HEK293 (cell line): ENCODE measurements at regions of chr17 and their contacts with region 1.

Region 1: GRCh38 chr17:58136669-58137283 is 11.4 kb upstream of the OR4D1 start:
- H3K4me3 ChIP-seq: no peak overlapping the region
- H3K27ac ChIP-seq: no peak overlapping the region
- H3K4me1 ChIP-seq: no peaks in the 10 kb centered on the region
- CTCF ChIP-seq: 0 out of 2 replicates have a peak, but pooled peaks have one; percentile 41

Region 2: GRCh38 chr17:58121925-58122324 is 14.9 kb before region 1 on chr17:
- CTCF ChIA-PET with region 1: interaction called, 19 read pairs
- POLR2A ChIA-PET with region 1: no interaction called
- H3K4me3 ChIP-seq: no peak overlapping the region
- H3K27ac ChIP-seq: no peak overlapping the region
- H3K4me1 ChIP-seq: no peaks in the 10 kb centered on the region
- CTCF ChIP-seq: peak; percentile 68

Region 3: GRCh38 chr17:58148609-58149008 is 11.8 kb after region 1 on chr17:
- CTCF ChIA-PET with region 1: interaction called, 12 read pairs
- POLR2A ChIA-PET with region 1: no interaction called
- H3K4me3 ChIP-seq: no peak overlapping the region
- H3K27ac ChIP-seq: no peak overlapping the region
- H3K4me1 ChIP-seq: no peaks in the 10 kb centered on the region
- CTCF ChIP-seq: no peak

Region 4: DNA sequence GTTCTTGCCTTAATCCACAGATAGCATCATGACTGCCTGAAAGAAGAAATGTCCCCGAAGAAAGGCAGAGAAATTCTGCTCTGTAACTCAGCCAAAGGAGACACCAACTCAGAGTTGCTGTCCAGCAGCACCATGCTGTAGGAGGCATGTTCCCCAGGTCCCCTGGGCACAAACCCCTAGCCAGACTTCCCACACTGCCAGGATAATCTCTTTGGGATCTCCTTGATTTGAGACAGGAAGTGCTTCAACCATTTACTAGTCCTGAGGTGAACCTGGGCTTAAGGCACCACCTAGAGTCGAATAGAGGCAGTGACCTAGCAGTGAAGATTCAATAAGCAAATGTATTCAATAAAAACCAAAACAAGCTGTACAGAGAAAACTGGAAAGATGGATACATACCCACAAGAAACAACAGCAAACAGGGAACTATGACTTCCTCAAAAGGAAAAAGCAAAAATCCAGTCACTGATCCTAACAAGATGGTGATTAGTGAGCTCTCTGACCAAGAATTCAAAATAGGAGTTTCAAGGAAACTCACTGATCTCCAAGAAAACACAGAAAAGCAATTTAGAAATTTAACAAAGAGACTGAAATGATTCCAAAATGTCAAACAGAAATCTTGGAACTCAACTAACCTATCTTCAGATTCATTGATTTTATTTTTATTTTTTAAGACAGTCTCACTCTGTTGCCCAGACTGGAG is 35.7 kb after region 1 on chr17:
- CTCF ChIA-PET with region 1: interaction called, 11 read pairs
- POLR2A ChIA-PET with region 1: no interaction called
- H3K4me3 ChIP-seq: no peak overlapping the region
- H3K27ac ChIP-seq: no peak overlapping the region
- H3K4me1 ChIP-seq: no peaks in the 10 kb centered on the region
- CTCF ChIP-seq: no peak

Region 5: GRCh38 chr17:58191241-58191896 is 54.6 kb after region 1 on chr17:
- CTCF ChIA-PET with region 1: no interaction called
- POLR2A ChIA-PET with region 1: no interaction called
- H3K4me3 ChIP-seq: no peak overlapping the region
- H3K27ac ChIP-seq: no peak overlapping the region
- H3K4me1 ChIP-seq: no peaks in the 10 kb centered on the region
- CTCF ChIP-seq: no peak